HEK293 (cell line): ENCODE measurements at regions of chr9 and their contacts with region 1.

Region 1: GRCh38 chr9:114291064-114291474 is 31.8 kb upstream of the ORM1 start:
- H3K4me3 ChIP-seq: no peak overlapping the region
- H3K27ac ChIP-seq: no peak overlapping the region
- H3K4me1 ChIP-seq: no peaks in the 10 kb centered on the region
- CTCF ChIP-seq: peak; percentile 49; the same call in 1 of the 2 replicates

Region 2: GRCh38 chr9:114098016-114098935 is 192.8 kb before region 1 on chr9:
- CTCF ChIA-PET with region 1: interaction called, 20 read pairs
- POLR2A ChIA-PET with region 1: no interaction called
- H3K4me3 ChIP-seq: peak overlapping the region; percentile 49
- H3K27ac ChIP-seq: no peak overlapping the region
- H3K4me1 ChIP-seq: no peaks in the 10 kb centered on the region
- CTCF ChIP-seq: no peak

Region 3: GRCh38 chr9:114141553-114142402 is 149.3 kb before region 1 on chr9:
- CTCF ChIA-PET with region 1: interaction called, 14 read pairs
- POLR2A ChIA-PET with region 1: no interaction called
- H3K4me3 ChIP-seq: no peak overlapping the region
- H3K27ac ChIP-seq: no peak overlapping the region
- H3K4me1 ChIP-seq: no peaks in the 10 kb centered on the region
- CTCF ChIP-seq: no peak

Region 4: GRCh38 chr9:114238891-114239875 is 51.9 kb before region 1 on chr9:
- CTCF ChIA-PET with region 1: interaction called, 14 read pairs
- POLR2A ChIA-PET with region 1: no interaction called
- H3K4me3 ChIP-seq: no peak overlapping the region
- H3K27ac ChIP-seq: no peak overlapping the region
- H3K4me1 ChIP-seq: no peaks in the 10 kb centered on the region
- CTCF ChIP-seq: no peak

Region 5: GRCh38 chr9:114271641-114272081 is 19.4 kb before region 1 on chr9:
- CTCF ChIA-PET with region 1: interaction called, 11 read pairs
- POLR2A ChIA-PET with region 1: no interaction called
- H3K4me3 ChIP-seq: no peak overlapping the region
- H3K27ac ChIP-seq: no peak overlapping the region
- H3K4me1 ChIP-seq: no peaks in the 10 kb centered on the region
- CTCF ChIP-seq: no peak

Region 6: DNA sequence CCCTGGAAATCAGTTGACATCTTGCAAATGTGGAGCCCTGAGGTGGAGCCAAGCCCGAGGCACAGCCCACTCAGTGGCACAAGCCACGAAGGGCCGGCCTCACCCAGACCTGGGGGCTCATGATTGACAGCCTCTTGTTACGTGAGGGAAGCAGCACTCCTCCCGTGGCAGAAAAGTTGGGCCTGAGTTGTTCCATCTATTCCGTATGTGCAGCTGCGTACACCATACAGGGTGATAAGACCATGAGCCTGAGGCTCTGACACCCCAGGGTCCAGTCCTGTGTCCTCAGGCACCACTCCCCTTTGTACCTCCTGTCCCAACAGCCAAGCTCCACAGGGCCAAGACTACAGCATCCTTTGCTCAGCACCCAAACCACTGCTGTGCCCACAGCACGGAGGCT is 36.7 kb after region 1 on chr9:
- CTCF ChIA-PET with region 1: no interaction called
- POLR2A ChIA-PET with region 1: no interaction called
- H3K4me3 ChIP-seq: no peak overlapping the region
- H3K27ac ChIP-seq: no peak overlapping the region
- H3K4me1 ChIP-seq: no peaks in the 10 kb centered on the region
- CTCF ChIP-seq: no peak